Breast epithelium (tissue), 4 donors: ENCODE measurements at regions of chr3 and their contacts with region 1.

Region 1: GRCh38 chr3:159982442-159982974 is 6.1 kb upstream of the IL12A start:
- DNase-seq: no peak
- H3K4me3 ChIP-seq: no peak overlapping the region
- H3K27ac ChIP-seq: no peak overlapping the region
- H3K4me1 ChIP-seq: no peaks in the 10 kb centered on the region
- H3K27me3 ChIP-seq: no peaks in the 10 kb centered on the region
- CTCF ChIP-seq: no peak
- POLR2A ChIP-seq: no peak

Region 2: GRCh38 chr3:159366476-159366875 is 616.0 kb before region 1 on chr3:
- intact Hi-C with region 1: no loop called
- DNase-seq: no peak
- H3K4me3 ChIP-seq: no peak overlapping the region
- H3K27ac ChIP-seq: no peak overlapping the region
- H3K4me1 ChIP-seq: no peaks in the 10 kb centered on the region
- H3K27me3 ChIP-seq: no peaks in the 10 kb centered on the region
- CTCF ChIP-seq: no peak
- POLR2A ChIP-seq: no peak

Region 3: DNA sequence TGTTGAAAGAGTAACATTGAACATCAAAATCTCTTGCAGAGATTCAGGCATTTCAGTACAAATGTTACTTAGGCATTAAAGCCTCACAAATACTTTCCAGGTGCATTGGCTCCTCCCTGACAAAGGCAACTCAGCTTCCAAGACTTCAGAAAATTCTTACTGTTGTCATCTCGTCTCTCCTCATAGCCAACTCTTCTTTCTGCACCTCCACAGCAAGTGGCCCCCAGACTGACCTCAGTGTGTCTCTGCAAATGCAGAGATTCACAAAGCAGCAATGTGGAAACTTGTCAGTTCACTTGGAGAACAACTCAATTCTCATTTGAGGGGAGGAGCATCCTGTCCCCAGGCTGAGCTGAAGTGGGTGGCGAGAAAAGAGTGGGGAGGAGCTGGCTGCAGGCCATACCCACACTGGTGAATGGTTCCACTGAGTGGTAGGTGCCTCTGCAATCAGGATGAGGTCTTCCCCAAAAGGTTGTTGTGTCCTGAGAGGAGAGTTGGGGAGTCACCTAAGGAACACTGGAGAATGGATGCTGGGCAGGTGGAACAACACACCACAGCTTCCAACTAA is 242.5 kb before region 1 on chr3:
- intact Hi-C with region 1: loop called (anchors 5 kb)
- DNase-seq: no peak
- H3K4me3 ChIP-seq: no peak overlapping the region
- H3K27ac ChIP-seq: no peak overlapping the region
- H3K4me1 ChIP-seq: no peaks in the 10 kb centered on the region
- H3K27me3 ChIP-seq: no peaks in the 10 kb centered on the region
- CTCF ChIP-seq: no peak
- POLR2A ChIP-seq: no peak